ENCODE measurements at regions of chr17 and their contacts with region 1.

Region 1: DNA sequence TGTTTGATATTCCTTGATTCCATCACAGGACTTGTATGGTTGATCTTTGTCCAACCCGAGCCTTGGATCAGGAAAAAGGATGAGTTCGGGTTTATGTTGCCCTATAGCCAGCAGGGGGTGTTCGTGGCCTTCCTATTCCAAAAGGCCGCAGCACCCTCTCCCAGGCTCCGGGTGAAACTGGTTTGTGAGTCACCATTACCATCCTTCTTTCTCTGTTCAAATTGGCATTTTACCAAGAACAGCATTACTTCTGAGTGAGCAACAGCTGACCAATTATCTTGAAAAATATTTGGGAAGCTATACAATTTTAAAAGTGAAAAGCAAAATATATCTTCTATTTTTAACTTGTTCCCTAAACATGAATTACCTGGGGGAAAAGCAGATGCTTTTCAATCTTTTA is 24.3 kb upstream of the KRT20 start:
- DNase-seq: peak; percentile 84
- ATAC-seq: peak; percentile 96

Region 2: GRCh38 chr17:40803617-40804082 is 105.7 kb before region 1 on chr17:
- intact Hi-C with region 1: loop called (anchors 10 kb)
- DNase-seq: peak; percentile 87
- ATAC-seq: peak; percentile 95

Region 3: DNA sequence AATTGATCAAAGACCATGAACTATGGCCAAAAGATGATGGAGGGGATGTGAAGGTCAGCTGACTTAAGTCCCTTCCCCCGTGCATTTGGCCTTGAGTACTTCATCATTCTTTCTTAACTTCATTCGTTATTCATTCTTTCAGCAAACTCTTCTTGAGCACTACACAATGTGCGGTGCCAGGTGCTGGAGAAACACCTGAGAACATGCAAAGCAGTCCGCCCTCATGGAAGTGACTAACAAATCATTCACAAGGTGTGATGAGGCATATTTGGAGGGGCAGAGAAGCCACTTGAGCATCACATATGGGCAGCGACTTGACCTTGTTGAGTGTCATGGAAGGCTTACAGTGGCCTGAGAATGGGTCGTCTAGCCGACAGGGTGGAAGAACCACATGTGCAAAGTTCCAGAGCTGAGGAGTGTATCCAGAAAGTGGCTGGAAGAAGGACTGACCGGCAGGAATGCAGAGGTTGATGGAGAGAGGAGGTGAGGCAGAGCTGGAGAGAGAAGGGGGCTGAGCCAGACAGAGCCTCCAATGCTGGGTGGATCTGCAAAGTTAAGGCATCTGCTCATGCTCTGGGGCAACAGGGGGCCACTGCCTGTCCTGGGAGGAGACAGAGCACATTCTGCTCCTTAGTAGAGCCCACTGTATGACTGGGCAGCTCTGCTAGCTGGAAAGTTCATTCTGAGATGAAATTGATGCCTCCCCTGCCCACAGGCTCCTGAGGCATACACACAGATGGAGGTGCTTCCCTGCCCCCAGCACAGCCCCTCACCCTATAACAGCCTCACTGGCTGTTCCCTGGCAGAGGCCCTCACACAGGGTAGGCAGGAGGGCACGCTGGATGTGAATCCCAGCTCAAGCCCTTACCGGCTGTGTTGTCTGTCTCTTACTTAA is 754.3 kb after region 1 on chr17:
- intact Hi-C with region 1: loop called (anchors 5 kb)
- DNase-seq: no peak
- ATAC-seq: no peak

Region 4: GRCh38 chr17:41944943-41945342 is 1035.6 kb after region 1 on chr17:
- intact Hi-C with region 1: no loop called
- DNase-seq: no peak
- ATAC-seq: no peak